ENCODE measurements at regions of chr7 and their contacts with region 1.

Region 1: DNA sequence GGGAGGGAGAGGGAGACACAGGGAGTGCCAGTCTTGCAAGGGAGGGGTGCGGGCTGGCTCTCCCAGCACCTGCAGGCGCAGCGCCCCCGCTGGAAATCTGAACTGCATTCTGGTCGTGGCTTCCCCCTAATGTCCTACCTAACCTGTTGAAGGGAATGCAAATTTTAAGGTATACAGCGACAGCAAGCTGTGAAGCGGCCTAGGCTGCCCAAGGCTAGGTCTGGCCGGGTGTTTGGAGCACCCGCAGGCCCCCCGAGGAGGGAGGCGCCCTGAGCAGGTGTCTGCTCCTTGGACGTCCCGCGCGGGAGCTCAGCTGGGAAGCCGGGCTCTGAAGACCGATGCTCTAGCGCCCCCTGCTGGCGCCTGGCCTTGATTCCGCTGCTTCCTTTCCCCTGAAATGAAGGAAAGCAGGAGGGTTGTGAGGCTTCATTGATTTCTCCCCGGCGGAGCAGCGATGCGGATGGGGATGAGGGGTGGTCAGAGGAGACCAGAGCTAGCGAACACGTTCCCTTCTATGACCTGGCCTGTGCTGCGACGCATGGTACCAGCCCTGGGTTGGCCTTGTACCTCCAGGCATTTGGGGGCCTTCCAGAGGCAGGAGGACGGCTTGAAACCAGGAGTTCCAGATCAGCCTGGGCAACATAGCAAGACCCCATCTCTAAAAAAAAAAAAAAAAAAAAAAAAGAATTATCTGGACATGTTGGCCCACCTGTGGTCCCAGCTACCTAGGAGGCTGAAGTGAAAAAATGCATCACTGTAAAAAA is 601.3 kb downstream of the GALNT17 start:
- DNase-seq: peak; percentile 95
- H3K4me3 ChIP-seq: peak overlapping the region; percentile 15 to 24
- H3K27ac ChIP-seq: no peak overlapping the region
- H3K4me1 ChIP-seq: no peaks in the 10 kb centered on the region
- H3K27me3 ChIP-seq: no peaks in the 10 kb centered on the region
- CTCF ChIP-seq: peak; percentile 93 to 97 (median 95)
- POLR2A ChIP-seq: no peak

Region 2: DNA sequence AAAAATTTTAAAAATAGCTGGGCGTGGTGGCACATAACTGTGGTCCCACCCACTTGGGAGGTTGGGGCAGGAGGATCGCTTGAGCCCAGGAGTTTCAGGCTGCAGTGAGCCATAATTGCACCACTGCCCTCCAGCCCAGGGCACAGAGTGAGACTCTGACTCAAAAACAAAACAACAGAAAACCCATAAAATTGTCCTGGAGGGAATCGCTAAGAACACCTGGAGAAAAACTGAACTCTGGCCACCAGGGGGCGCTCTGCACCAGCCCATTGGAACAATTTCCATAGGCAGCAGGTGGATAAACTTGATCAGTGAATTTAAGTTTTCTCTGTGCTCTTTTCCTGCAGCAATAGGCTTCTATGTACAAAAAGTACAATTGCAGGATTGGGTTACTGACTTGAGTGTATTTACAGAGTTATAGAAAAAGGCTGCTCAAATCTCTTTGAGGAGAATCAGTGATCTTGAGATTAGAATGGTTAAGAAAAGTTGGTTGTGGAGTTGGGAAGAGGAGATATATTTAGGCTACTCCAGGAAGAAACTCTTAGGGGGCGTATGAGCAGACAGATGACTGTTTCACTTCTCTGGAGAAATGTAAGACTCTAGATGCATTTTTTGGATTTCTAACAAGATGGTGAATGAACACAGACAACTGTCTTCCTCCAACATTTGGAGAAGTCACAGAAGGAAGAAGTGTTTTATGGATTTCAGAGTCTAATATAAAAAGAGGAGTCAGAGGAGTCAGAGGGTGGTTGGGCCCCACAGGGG is 876.2 kb before region 1 on chr7:
- intact Hi-C with region 1: loop called (anchors 10 kb)
- DNase-seq: peak; percentile 88
- H3K4me3 ChIP-seq: no peak overlapping the region
- H3K27ac ChIP-seq: no peak overlapping the region
- H3K4me1 ChIP-seq: no peaks in the 10 kb centered on the region
- H3K27me3 ChIP-seq: no peaks in the 10 kb centered on the region
- CTCF ChIP-seq: peak; percentile 89 to 99 (median 97)
- POLR2A ChIP-seq: no peak

Region 3: GRCh38 chr7:71665716-71666115 is 67.6 kb before region 1 on chr7:
- intact Hi-C with region 1: no loop called
- DNase-seq: no peak
- H3K4me3 ChIP-seq: no peak overlapping the region
- H3K27ac ChIP-seq: no peak overlapping the region
- H3K4me1 ChIP-seq: no peaks in the 10 kb centered on the region
- H3K27me3 ChIP-seq: no peaks in the 10 kb centered on the region
- CTCF ChIP-seq: no peak
- POLR2A ChIP-seq: no peak

Region 4: DNA sequence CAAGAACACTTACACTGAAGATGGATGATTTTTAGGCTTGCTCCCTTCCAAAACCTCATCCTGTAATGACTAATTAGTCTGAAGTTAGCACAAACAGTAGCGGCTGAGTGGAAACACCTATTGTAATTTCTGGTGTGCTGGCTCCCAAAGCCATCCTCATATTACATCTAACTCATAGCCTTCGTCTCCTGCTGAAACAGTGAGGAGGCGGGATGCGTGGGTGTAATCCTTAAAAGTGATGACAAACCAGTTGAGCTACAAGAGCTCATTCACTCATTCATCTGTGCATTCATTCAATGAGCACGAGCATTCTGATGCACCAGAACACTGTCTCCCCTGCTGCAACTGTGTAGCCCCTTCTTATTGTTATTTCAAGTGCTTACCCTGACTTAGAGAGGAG is 443.6 kb after region 1 on chr7:
- intact Hi-C with region 1: no loop called
- DNase-seq: no peak
- H3K4me3 ChIP-seq: no peak overlapping the region
- H3K27ac ChIP-seq: no peak overlapping the region
- H3K4me1 ChIP-seq: no peaks in the 10 kb centered on the region
- H3K27me3 ChIP-seq: no peaks in the 10 kb centered on the region
- CTCF ChIP-seq: no peak
- POLR2A ChIP-seq: no peak

Measured in testis (tissue), 5 donors.